ENCODE measurements at regions of chr12 and their contacts with region 1.

Region 1: DNA sequence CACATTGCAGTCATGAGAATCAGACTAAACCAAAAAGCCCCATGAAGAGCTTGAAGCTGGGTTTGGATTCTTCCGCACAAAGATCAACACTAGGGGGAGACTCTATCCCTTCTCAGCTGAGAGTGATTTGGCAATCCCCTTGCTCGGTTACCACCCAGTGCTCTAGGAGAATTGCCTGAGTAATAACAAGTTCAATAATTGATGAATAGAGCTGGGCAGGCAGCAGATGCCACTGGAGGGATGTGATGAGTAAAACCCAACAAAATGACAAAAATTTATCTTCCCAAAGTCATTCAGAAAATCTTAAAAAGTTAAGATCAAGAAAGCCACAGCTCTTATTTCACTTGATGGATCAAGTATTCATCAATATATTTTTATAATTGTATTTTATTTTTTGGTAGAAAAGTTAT is 185.6 kb upstream of the ARID2 start:
- DNase-seq: peak in 3 of 5 donors; percentile 37 to 46 (median 39)
- ATAC-seq: peak; percentile 55 to 94 (median 78)
- H3K4me3 ChIP-seq: no peak overlapping the region
- H3K27ac ChIP-seq: no peak overlapping the region
- H3K4me1 ChIP-seq: peaks cover 0 to 10% (median 0%) of the 10 kb centered on the region in 12 donors
- H3K27me3 ChIP-seq: no peaks in the 10 kb centered on the region
- CTCF ChIP-seq: peak; percentile 68 to 82 (median 76)
- POLR2A ChIP-seq: no peak

Region 2: DNA sequence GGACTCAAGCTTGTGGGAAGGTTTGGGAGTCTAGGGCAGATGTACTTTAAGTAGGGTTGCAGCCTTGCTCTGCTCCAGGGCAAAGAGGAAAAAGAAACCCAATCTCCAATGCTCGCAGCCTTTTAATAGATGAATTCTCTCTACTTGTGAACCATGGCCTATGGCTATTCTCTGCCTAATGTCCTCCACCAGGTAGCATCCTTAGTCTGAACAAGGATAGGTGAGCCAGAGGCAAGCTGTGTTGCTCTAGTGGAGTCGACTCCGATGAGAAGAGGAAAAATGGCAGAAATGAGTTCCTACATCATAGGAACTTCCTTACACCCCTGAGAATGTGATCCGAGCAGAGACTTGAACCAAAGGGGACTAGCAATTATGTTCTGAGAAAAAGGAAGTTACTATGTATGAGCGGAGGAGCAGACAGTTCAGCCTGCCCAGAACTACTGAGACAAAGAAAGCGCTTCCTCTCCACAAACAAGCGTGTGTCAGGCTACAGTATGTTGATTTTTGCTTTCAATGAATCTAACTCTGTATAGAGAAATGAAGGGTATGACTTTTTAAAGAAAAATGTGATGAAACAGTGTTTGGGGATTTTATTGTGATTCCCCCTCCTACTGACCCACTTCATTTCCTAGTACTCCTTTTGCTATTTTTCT is 32.0 kb after region 1 on chr12:
- intact Hi-C with region 1: no loop called
- DNase-seq: no peak
- ATAC-seq: peak in 1 of 4 donors; percentile 26
- H3K4me3 ChIP-seq: no peak overlapping the region
- H3K27ac ChIP-seq: peak overlapping the region in 1 of 12 donors; percentile 51
- H3K4me1 ChIP-seq: peaks cover 0 to 16% (median 0%) of the 10 kb centered on the region in 12 donors
- H3K27me3 ChIP-seq: no peaks in the 10 kb centered on the region
- CTCF ChIP-seq: no peak
- POLR2A ChIP-seq: no peak

Region 3: GRCh38 chr12:45728630-45729232 is 184.8 kb after region 1 on chr12:
- intact Hi-C with region 1: loop called in 8 of 10 experiments (anchors 5 to 10 kb)
- DNase-seq: peak; percentile 97 to 99 (median 97)
- ATAC-seq: peak; percentile 79 to 88 (median 81)
- H3K4me3 ChIP-seq: peak overlapping the region; percentile 64 to 94 (median 83)
- H3K27ac ChIP-seq: peak overlapping the region; percentile 94 to 100 (median 98)
- H3K4me1 ChIP-seq: peaks cover 9 to 58% (median 40%) of the 10 kb centered on the region in 12 donors
- H3K27me3 ChIP-seq: no peaks in the 10 kb centered on the region
- CTCF ChIP-seq: peak; percentile 85 to 99 (median 97)
- POLR2A ChIP-seq: peak in 1 of 2 donors; percentile 81

Region 4: DNA sequence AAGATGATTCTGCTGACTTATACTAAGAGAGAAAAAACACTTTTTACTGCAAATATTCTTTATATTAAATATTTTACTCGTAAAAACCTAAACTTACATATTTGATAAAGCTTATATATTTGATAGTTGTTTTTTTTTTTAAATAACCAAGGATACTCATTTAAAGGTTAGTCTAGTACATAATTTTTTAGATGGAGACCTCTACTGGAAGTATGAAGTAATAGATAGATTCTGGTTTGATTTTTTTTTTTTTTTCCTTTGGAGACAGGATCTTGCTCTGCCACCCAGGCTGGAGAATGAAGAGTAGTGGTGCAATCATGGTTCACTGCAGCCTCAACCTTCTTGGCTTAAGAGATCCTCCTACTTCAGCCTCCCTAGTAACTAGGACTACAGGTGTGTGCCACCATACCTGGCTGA is 202.0 kb after region 1 on chr12:
- intact Hi-C with region 1: loop called in 5 of 10 experiments (anchors 5 kb)
- DNase-seq: no peak
- ATAC-seq: peak in 2 of 4 donors; percentile 39 to 53
- H3K4me3 ChIP-seq: no peak overlapping the region
- H3K27ac ChIP-seq: no peak overlapping the region
- H3K4me1 ChIP-seq: peaks cover 0 to 12% (median 0%) of the 10 kb centered on the region in 12 donors
- H3K27me3 ChIP-seq: no peaks in the 10 kb centered on the region
- CTCF ChIP-seq: peak in 11 of 12 donors; percentile 10 to 62 (median 46)
- POLR2A ChIP-seq: no peak

Region 5: GRCh38 chr12:46005151-46005797 is 461.4 kb after region 1 on chr12:
- intact Hi-C with region 1: loop called in 3 of 10 experiments (anchors 5 to 10 kb)
- DNase-seq: no peak
- ATAC-seq: no peak
- H3K4me3 ChIP-seq: no peak overlapping the region
- H3K27ac ChIP-seq: no peak overlapping the region
- H3K4me1 ChIP-seq: no peaks in the 10 kb centered on the region
- H3K27me3 ChIP-seq: no peaks in the 10 kb centered on the region
- CTCF ChIP-seq: peak in 11 of 12 donors; percentile 17 to 57 (median 42)
- POLR2A ChIP-seq: no peak